A549 (cell line): ENCODE measurements at regions of chr2 and their contacts with region 1.

Region 1: DNA sequence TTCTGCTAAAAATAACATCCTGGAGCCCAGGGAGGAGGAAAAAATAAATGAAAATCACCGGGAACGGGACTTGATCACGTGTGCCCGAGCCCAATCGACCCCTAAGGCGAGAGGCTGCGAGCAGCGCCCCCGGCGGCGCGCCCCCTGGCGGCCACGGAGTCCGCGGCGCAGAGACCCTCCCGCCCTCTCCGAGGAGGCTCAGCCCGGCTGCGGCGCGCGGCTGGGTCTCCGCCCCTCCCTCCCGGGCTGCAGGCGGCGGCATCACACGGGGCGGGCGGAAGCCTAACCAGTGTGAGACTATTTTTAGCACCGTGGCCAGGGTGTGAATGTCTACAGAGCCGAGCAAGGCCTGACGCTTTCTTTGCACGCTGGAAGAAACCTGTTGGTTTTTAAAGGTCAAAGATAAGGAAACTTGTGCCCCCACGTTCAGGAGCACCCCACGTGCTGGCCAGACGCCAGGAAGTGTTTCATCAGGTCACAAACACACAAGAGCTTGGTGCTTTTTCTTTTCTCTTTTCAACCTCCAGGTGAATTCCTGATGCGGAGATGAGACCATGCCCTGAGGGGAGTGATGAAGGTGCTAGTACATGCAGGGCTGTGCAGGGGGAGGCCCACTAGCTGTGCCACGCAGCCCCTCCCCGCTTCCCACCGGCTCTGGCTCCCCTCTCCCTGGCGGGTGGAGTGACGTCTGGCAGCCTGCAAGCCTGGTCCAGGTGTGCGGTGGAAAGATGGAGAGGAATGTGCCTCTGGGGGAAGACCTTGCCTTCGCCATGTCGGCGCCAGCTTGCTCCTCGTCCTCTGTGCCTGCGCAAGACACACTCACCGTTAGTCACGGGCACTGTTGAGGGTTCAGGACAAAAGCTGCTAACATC is 35.3 kb upstream of the DNMT3A start:
- DNase-seq: peak; percentile 80 to 84
- ATAC-seq: peak; percentile 92 to 98
- H3K4me3 ChIP-seq: peak overlapping the region; percentile 31
- H3K27ac ChIP-seq: peak overlapping the region; percentile 63 to 76
- H3K4me1 ChIP-seq: peaks cover 11% of the 10 kb centered on the region
- CTCF ChIP-seq: peak; percentile 100
- EP300 ChIP-seq: no peak
- POLR2A ChIP-seq: no peak
- RAD21 ChIP-seq: peak; percentile 54 to 77

Region 2: GRCh38 chr2:25309402-25309801 is 67.6 kb before region 1 on chr2:
- CTCF ChIA-PET with region 1: interaction called, 22 read pairs
- POLR2A ChIA-PET with region 1: no interaction called
- DNase-seq: peak; percentile 73 to 78
- ATAC-seq: peak; percentile 65 to 88; a peak in 5 of 6 replicates
- H3K4me3 ChIP-seq: no peak overlapping the region
- H3K27ac ChIP-seq: no peak overlapping the region
- H3K4me1 ChIP-seq: no peaks in the 10 kb centered on the region
- CTCF ChIP-seq: peak; percentile 65
- EP300 ChIP-seq: no peak
- POLR2A ChIP-seq: no peak
- RAD21 ChIP-seq: peak; percentile 56 to 69

Region 3: GRCh38 chr2:25342372-25343186 is 34.4 kb before region 1 on chr2:
- CTCF ChIA-PET with region 1: interaction called, 49 read pairs
- POLR2A ChIA-PET with region 1: interaction called, 3 read pairs
- DNase-seq: peak; percentile 84 to 92
- ATAC-seq: peak; percentile 82 to 96
- H3K4me3 ChIP-seq: peak overlapping the region; percentile 70
- H3K27ac ChIP-seq: peak overlapping the region; percentile 90 to 99
- H3K4me1 ChIP-seq: peaks cover 15% of the 10 kb centered on the region
- CTCF ChIP-seq: peak; percentile 72
- EP300 ChIP-seq: no peak
- POLR2A ChIP-seq: no peak
- RAD21 ChIP-seq: peak; percentile 70 to 79

Region 4: DNA sequence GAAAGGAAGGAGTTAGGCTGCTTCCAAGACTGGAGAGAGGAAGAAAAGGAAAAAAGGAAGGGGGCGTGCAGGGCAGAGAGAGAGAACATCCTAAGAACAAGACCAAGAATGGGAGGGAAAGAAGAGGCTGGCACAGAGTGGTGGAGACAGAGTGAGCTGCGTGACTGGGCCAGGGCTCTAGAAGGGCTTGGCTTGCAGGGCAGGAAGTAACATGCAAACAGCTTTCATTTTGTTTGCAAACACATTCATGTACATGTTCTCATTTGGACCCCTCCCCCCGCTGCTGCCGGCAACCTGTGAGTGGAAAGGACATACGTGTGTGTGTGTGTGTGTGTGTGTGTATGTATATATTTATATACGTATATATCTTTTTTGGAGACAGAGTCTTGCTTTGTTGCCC is 11.5 kb after region 1 on chr2:
- CTCF ChIA-PET with region 1: interaction called, 92 read pairs
- POLR2A ChIA-PET with region 1: no interaction called
- DNase-seq: no peak
- ATAC-seq: no peak
- H3K4me3 ChIP-seq: no peak overlapping the region
- H3K27ac ChIP-seq: no peak overlapping the region
- H3K4me1 ChIP-seq: no peaks in the 10 kb centered on the region
- CTCF ChIP-seq: no peak
- EP300 ChIP-seq: no peak
- POLR2A ChIP-seq: no peak
- RAD21 ChIP-seq: no peak

Region 5: DNA sequence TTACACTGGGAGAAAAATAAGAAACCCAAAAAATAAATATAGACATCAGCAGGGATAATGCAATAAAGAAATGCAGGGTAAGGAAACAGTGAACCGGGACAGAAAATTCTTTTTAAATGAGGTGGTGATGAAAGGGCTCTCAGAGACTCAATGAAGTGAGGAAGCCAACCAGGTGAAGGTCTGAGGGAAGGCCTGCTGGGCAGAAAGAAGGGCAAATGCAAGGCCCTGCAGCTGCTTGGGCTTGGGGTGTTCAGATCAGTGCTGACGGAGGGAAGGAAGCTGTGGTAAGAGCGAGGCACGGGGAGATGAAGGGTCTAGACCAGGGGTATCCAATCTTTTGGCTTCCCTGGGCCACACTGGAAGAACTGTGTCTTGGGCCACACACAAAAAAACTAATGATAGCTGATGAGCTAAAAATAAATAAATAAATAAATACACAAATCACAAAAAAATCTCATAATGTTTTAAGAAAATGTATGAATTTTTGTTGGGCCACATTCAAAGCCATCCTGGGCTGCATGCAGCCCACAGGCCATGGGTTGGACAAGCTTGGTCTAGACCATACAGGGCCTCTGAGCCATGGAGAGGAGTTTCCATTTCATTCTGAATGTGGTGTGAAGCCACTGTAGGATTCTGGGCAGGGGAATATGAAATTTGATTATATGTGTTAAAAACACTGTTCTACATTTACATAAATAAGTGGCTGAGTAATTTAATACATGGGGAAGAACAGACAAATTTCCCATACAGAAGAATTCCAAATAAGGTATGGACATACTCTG is 61.1 kb after region 1 on chr2:
- CTCF ChIA-PET with region 1: interaction called, 13 read pairs
- POLR2A ChIA-PET with region 1: no interaction called
- DNase-seq: no peak
- ATAC-seq: no peak
- H3K4me3 ChIP-seq: no peak overlapping the region
- H3K27ac ChIP-seq: no peak overlapping the region
- H3K4me1 ChIP-seq: no peaks in the 10 kb centered on the region
- CTCF ChIP-seq: no peak
- EP300 ChIP-seq: no peak
- POLR2A ChIP-seq: no peak
- RAD21 ChIP-seq: no peak